ENCODE measurements at regions of chrX and their contacts with region 1.

Region 1: GRCh38 chrX:55451990-55452832 is at the start of gene MAGEH1:
- DNase-seq: peak; percentile 85
- ATAC-seq: peak; percentile 93
- H3K4me3 ChIP-seq: peak within 1 kb of the TSS; percentile 51 to 69 (median 65)
- H3K4me3 Mint-ChIP-seq: peak within 1 kb of the TSS; percentile 95
- H3K27ac ChIP-seq: peak within 1 kb of the TSS; percentile 74 to 81
- H3K27ac Mint-ChIP-seq: peak within 1 kb of the TSS; percentile 89
- H3K4me1 ChIP-seq: peaks cover 6 to 8% of the 10 kb centered on the region in 2 donors
- H3K4me1 Mint-ChIP-seq: peaks cover 18% of the 10 kb centered on the region
- H3K27me3 ChIP-seq: no peaks in the 10 kb centered on the region
- H3K27me3 Mint-ChIP-seq: no peaks in the 10 kb centered on the region
- CTCF ChIP-seq: no peak
- total RNA-seq, gene MAGEH1: 13.6 and 14.3 TPM in 2 replicates

Region 2: GRCh38 chrX:54439967-54440871 is 1012.0 kb before region 1 on chrX and contains the start of gene TSR2:
- CTCF ChIA-PET with region 1: no interaction called
- POLR2A ChIA-PET with region 1: no interaction called
- intact Hi-C with region 1: no loop called
- DNase-seq: peak; percentile 81
- ATAC-seq: peak; percentile 99
- H3K4me3 ChIP-seq: peak within 1 kb of the TSS; percentile 70 to 92 (median 84)
- H3K4me3 Mint-ChIP-seq: peak within 1 kb of the TSS; percentile 94
- H3K27ac ChIP-seq: peak within 1 kb of the TSS; percentile 50 to 70
- H3K27ac Mint-ChIP-seq: peak within 1 kb of the TSS; percentile 89
- H3K4me1 ChIP-seq: peaks cover 14 to 19% of the 10 kb centered on the region in 2 donors
- H3K4me1 Mint-ChIP-seq: peaks cover 25% of the 10 kb centered on the region
- H3K27me3 ChIP-seq: no peaks in the 10 kb centered on the region
- H3K27me3 Mint-ChIP-seq: no peaks in the 10 kb centered on the region
- CTCF ChIP-seq: no peak
- total RNA-seq, gene TSR2: 38.3 and 41.4 TPM in 2 replicates

Region 3: DNA sequence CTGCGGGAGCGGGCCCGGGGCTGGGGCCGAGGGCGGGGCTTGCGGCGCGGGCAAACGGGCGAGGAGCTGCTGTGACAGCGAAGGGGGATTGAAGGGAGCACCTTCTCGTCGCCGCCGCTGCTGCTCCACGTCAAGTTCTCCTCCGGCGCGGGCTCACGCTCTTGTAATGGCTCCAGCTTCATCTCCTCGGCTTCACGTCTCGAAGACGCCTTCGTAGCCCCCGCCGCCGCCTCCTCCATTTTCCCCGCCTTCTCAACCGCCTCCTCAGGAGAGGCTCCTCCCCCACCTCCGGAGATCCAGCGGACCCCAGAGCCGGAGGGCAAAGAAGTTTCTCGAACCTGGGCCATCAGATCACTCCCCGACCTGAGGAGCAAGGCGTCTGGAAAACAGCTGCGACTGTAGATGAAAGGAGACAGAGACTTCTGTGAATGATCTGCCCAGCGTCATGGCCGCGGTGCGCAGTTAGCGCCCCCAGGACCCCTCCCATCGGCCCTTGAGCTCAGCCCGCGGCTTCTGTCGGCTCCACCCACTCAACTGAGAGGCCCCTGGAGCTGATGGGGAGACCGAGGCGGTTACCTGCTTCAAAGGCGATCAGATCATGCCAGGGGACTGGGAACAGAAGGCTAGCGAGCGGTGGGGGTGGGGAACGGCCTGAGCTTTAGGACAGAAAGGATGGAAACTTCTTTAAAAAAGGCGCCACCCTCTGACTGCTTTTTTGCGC is 36.5 kb after region 1 on chrX:
- CTCF ChIA-PET with region 1: interaction called, 17 read pairs
- POLR2A ChIA-PET with region 1: interaction called, 10 read pairs
- intact Hi-C with region 1: no loop called
- DNase-seq: peak; percentile 83
- ATAC-seq: peak; percentile 73
- H3K4me3 ChIP-seq: peak overlapping the region; percentile 73 to 94 (median 77)
- H3K4me3 Mint-ChIP-seq: peak overlapping the region; percentile 97
- H3K27ac ChIP-seq: peak overlapping the region; percentile 88 to 92
- H3K27ac Mint-ChIP-seq: peak overlapping the region; percentile 98
- H3K4me1 ChIP-seq: peaks cover 3 to 11% of the 10 kb centered on the region in 2 donors
- H3K4me1 Mint-ChIP-seq: peaks cover 15% of the 10 kb centered on the region
- H3K27me3 ChIP-seq: no peaks in the 10 kb centered on the region
- H3K27me3 Mint-ChIP-seq: no peaks in the 10 kb centered on the region
- CTCF ChIP-seq: no peak

Measured in B cell (primary cell).